ENCODE measurements at regions of chr19 and their contacts with region 1.

Region 1: GRCh38 chr19:18612772-18613588 is at the start of gene TMEM59L:
- DNase-seq: peak; percentile 60
- ATAC-seq: no peak; the same call in 1 of the 2 replicates
- H3K4me3 Mint-ChIP-seq: peak within 1 kb of the TSS; percentile 80
- H3K27ac Mint-ChIP-seq: no peak within 1 kb of the TSS
- H3K4me1 Mint-ChIP-seq: peaks cover 38% of the 10 kb centered on the region
- H3K27me3 Mint-ChIP-seq: peaks cover 78% of the 10 kb centered on the region
- CTCF ChIP-seq: no peak
- total RNA-seq, gene TMEM59L: 14.8 to 30.0 TPM (median 27.3 TPM) in 3 replicates

Region 2: DNA sequence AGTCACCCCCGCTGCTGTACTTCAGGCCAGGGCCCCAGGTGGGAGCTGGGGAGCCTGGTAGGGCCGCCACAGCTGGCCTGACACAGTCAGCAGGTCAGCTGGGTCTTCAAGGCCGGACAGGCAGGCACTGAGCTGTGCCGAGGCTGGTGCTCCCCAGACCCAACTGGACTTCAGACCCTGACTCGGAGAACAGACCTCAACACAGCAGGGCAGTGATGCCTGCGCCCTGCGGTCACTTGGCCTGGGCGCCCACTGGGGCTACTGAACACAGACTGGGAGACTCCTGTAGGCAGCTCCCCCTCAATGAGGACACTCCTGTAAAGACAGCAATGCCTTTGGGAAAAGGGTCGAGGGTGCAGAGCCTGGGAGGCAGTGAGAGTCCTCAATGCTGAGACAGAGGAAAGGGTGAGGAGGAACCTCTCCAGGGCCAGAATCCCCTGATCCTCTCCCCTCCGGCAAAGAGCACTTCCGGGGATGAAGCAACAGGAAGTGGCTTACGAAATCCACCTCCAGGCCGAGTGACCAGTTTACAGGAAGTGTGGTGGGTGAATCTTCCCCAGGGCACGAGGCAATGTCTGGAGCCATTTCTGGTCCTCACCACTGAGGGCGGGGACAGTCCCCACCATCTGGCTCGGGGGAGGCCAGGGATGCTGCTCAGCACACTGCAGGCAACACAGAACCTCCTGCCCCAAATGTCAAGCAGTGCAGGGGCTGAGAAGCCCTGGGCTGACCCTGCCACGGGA is 134.2 kb before region 1 on chr19:
- CTCF ChIA-PET with region 1: no interaction called
- POLR2A ChIA-PET with region 1: no interaction called
- DNase-seq: no peak
- ATAC-seq: no peak
- H3K4me3 Mint-ChIP-seq: no peak overlapping the region
- H3K27ac Mint-ChIP-seq: peak overlapping the region; percentile 85
- H3K4me1 Mint-ChIP-seq: peaks cover 28% of the 10 kb centered on the region
- H3K27me3 Mint-ChIP-seq: no peaks in the 10 kb centered on the region
- CTCF ChIP-seq: no peak

Region 3: DNA sequence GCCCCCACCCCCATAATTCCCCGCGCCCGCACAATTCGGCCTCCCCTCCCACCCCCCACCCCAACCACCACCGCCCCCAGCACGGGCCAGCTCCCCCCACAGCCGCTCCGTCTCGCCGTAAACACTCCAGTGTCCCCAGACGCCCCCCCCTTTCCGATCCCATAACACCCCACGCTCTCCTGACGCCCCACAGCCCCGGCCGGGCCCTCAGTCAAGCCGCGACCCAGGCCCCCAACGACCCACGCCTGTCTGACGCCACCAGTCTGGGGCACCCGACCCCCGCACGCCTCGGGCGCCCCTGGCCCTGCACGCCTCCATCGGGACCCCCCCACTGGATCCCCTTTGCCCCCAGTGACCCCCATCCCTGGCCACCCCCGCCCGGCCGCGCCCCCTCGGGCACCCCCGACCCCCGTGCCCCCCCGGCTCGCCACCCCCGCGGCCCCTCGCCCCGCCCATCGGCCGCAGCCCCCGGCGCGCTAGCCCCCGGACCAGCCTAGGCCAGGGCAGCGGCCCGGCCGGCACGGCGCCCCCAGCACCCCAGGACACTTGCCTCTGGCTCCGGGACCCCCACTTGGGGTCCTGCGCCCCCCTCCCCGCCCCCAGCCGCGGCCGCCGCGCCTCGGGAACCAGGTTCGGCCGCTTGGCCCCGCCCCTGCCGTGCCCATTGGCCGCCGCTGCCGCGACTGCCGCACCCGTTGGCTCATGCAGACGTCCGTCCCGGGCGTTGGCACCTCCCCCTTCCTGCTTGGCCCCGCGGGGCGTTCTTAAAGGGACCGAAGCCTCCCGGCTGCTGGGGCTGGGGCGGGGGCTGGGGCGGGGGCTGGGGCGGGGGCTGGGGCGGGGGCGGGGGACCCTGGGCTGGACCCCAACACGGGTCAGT is 69.8 kb before region 1 on chr19 and contains the start of gene FKBP8:
- CTCF ChIA-PET with region 1: no interaction called
- POLR2A ChIA-PET with region 1: no interaction called
- DNase-seq: peak; percentile 97
- ATAC-seq: peak; percentile 96
- H3K4me3 Mint-ChIP-seq: peak within 1 kb of the TSS; percentile 84
- H3K27ac Mint-ChIP-seq: peak within 1 kb of the TSS; percentile 90
- H3K4me1 Mint-ChIP-seq: peaks cover 16% of the 10 kb centered on the region
- H3K27me3 Mint-ChIP-seq: no peaks in the 10 kb centered on the region
- CTCF ChIP-seq: no peak
- total RNA-seq, gene FKBP8: 345 to 423 TPM (median 410 TPM) in 3 replicates

Region 4: DNA sequence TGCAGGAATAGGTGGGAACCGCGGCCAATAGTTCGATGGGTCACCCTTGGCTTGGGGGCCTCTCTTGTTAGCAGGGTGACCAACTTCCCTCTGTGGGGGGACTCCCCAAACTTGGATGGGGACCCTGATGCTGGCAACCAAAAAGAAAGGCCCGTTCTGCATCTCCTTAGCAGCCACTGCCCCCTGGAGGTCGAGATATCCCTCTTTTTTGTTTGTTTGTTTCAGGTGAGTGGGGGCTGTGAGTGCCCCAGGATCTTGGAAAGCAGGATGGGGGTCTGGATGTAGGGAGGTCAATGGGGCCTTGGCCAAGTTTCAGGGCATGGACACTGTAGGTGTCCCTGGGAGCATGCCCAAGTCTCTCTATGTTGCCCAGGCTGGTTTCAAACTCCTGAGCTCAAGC is 62.8 kb after region 1 on chr19:
- CTCF ChIA-PET with region 1: interaction called, 12 read pairs
- POLR2A ChIA-PET with region 1: no interaction called
- DNase-seq: peak; percentile 65
- ATAC-seq: peak; percentile 26
- H3K4me3 Mint-ChIP-seq: no peak overlapping the region
- H3K27ac Mint-ChIP-seq: no peak overlapping the region
- H3K4me1 Mint-ChIP-seq: peaks cover 18% of the 10 kb centered on the region
- H3K27me3 Mint-ChIP-seq: no peaks in the 10 kb centered on the region
- CTCF ChIP-seq: peak; percentile 45; the same call in 1 of the 2 replicates

Region 5: GRCh38 chr19:18866800-18867123 is 253.8 kb after region 1 on chr19:
- CTCF ChIA-PET with region 1: no interaction called
- POLR2A ChIA-PET with region 1: no interaction called
- DNase-seq: no peak
- ATAC-seq: no peak
- H3K4me3 Mint-ChIP-seq: no peak overlapping the region
- H3K27ac Mint-ChIP-seq: no peak overlapping the region
- H3K4me1 Mint-ChIP-seq: peaks cover 13% of the 10 kb centered on the region
- H3K27me3 Mint-ChIP-seq: peaks cover 13% of the 10 kb centered on the region
- CTCF ChIP-seq: no peak